ENCODE measurements at regions of chr4 and their contacts with region 1.

Region 1: DNA sequence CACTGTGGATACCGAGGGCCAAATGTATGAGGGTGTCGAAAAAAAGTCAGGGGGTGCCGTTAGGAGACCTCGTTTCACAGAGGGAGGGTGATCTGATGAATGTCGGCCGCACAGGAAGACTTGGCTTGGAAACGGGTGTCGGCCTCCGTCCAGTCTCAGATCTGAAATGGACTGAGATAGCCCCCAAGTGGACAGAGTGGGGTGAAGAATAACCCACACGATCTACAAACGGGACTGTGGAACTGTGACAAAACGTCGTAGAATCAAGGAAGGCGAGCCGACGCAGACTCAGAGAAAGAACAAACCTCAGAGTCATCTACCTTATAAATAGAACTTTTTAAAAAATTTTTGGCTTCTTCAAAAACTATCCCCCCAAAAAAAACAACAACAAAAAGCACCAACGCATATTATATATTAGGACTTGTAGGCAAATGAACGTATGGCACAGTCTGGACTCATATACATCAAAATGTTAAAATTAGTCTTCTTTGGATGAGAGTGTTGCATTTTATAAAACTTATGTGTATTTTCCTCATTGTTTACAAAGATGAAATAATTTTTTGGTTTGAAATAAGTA is 63.8 kb upstream of the IRF2 start:
- DNase-seq: peak; percentile 66
- ATAC-seq: peak; percentile 85
- H3K4me3 ChIP-seq: peak overlapping the region; percentile 51 to 74
- H3K27ac ChIP-seq: peak overlapping the region; percentile 61
- H3K4me1 ChIP-seq: peaks cover 0 to 5% of the 10 kb centered on the region in 2 experiments; a peak in 1 of 4 replicates
- H3K27me3 ChIP-seq: no peaks in the 10 kb centered on the region
- CTCF ChIP-seq: peak; percentile 43 to 64 (median 47); a peak in 4 of 6 replicates
- POLR2A ChIP-seq: no peak
- RAD21 ChIP-seq: peak; percentile 87

Region 2: GRCh38 chr4:183362916-183363542 is 1175.1 kb before region 1 on chr4:
- CTCF ChIA-PET with region 1: no interaction called
- POLR2A ChIA-PET with region 1: no interaction called
- RAD21 ChIA-PET with region 1: no interaction called
- intact Hi-C with region 1: no loop called
- DNase-seq: peak; percentile 24
- ATAC-seq: peak; percentile 78
- H3K4me3 ChIP-seq: no peak overlapping the region
- H3K27ac ChIP-seq: no peak overlapping the region
- H3K4me1 ChIP-seq: peaks cover 0 to 11% of the 10 kb centered on the region in 2 experiments; a peak in 2 of 4 replicates
- H3K27me3 ChIP-seq: no peaks in the 10 kb centered on the region
- CTCF ChIP-seq: peak; percentile 25 to 51 (median 45); a peak in 3 of 6 replicates
- POLR2A ChIP-seq: no peak
- RAD21 ChIP-seq: peak; percentile 60

Region 3: DNA sequence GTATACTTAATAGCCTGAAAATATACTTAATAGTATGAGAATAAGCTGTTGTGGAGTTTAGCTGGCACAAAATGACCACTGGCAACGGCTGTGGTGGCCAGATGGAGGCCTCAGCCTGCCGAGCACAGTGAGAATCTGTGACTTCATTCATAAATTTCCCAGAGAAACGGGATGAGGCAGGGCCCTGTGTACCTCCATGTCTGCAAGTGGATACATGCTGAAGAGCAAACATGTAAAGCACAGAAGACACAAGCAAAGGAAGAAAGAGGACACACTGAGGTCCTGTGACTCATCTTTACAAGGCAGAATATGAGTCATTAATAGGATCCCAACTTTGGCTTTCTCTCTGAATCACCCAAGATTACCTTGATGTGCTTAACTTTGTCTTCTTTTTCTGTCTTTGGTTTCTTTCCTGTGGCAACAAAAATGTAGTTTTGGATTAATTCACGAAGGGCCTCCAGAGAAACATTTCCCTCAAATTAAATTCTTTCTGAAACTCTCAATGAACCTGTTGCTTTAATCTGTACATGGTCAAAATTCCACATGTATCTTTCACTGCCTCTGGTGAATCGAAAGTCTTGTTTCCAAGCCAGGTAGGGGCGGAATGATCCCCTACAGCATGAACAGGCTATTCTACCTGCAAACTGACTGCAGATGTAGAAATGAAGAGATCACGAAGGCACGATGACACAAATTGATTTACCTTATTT is 120.2 kb before region 1 on chr4:
- CTCF ChIA-PET with region 1: no interaction called
- POLR2A ChIA-PET with region 1: no interaction called
- RAD21 ChIA-PET with region 1: no interaction called
- intact Hi-C with region 1: loop called (anchors 10 kb)
- DNase-seq: peak; percentile 51
- ATAC-seq: peak; percentile 88
- H3K4me3 ChIP-seq: peak overlapping the region in 1 of 2 experiments; percentile 25; a peak in 1 of 4 replicates
- H3K27ac ChIP-seq: peak overlapping the region; percentile 47; the same call in 1 of the 2 replicates
- H3K4me1 ChIP-seq: peaks cover 11 to 20% of the 10 kb centered on the region in 2 experiments
- H3K27me3 ChIP-seq: no peaks in the 10 kb centered on the region
- CTCF ChIP-seq: no peak
- POLR2A ChIP-seq: no peak
- RAD21 ChIP-seq: no peak

Region 4: GRCh38 chr4:184474263-184475095 is 63.6 kb before region 1 on chr4 and contains the start of gene IRF2:
- CTCF ChIA-PET with region 1: no interaction called
- POLR2A ChIA-PET with region 1: interaction called, 3 read pairs
- RAD21 ChIA-PET with region 1: no interaction called
- intact Hi-C with region 1: loop called (anchors 5 kb)
- DNase-seq: peak; percentile 71
- ATAC-seq: peak; percentile 70
- H3K4me3 ChIP-seq: peak within 1 kb of the TSS; percentile 63 to 68
- H3K27ac ChIP-seq: peak within 1 kb of the TSS; percentile 75
- H3K4me1 ChIP-seq: peaks cover 0 to 13% of the 10 kb centered on the region in 2 experiments; a peak in 2 of 4 replicates
- H3K27me3 ChIP-seq: no peaks in the 10 kb centered on the region
- CTCF ChIP-seq: no peak
- POLR2A ChIP-seq: no peak
- RAD21 ChIP-seq: no peak
- total RNA-seq, gene IRF2: 10.6 TPM

Measured in HCT116 (cell line).